Astrocyte of the cerebellum (primary cell): ENCODE measurements at regions of chr6 and their contacts with region 1.

Region 1: GRCh38 chr6:164612751-164613150 is 696.7 kb downstream of the C6orf118 start:
- DNase-seq: no peak
- H3K4me3 ChIP-seq: no peak overlapping the region
- CTCF ChIP-seq: no peak

Region 2: DNA sequence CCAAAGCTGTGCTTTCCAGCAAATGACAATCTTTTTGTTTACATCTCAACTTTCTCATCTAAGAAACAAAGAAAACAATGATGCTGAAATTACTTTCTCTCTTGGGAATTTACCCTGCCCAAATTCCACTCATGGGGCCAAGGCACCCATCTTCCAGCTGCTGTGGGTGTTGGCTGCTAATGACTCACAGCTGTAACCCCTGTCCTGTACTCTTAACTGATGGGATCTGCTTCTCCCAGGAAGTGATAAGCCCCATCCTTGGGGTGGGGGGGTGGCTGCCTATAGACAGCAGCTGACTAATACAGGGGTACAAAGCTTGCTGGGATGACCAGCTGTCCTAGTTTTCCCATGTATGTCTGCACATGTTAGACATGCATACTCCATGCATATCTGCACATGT is 242.0 kb before region 1 on chr6:
- in situ Hi-C with region 1: loop called (anchors 10 kb)
- DNase-seq: no peak
- H3K4me3 ChIP-seq: no peak overlapping the region
- CTCF ChIP-seq: no peak

Region 3: GRCh38 chr6:164693944-164694343 is 81.2 kb after region 1 on chr6:
- in situ Hi-C with region 1: loop called (anchors 10 kb)
- DNase-seq: peak; percentile 94
- H3K4me3 ChIP-seq: no peak overlapping the region
- CTCF ChIP-seq: no peak